Heart left ventricle (tissue), 16 donors: ENCODE measurements at regions of chr10 and their contacts with region 1.

Region 1: DNA sequence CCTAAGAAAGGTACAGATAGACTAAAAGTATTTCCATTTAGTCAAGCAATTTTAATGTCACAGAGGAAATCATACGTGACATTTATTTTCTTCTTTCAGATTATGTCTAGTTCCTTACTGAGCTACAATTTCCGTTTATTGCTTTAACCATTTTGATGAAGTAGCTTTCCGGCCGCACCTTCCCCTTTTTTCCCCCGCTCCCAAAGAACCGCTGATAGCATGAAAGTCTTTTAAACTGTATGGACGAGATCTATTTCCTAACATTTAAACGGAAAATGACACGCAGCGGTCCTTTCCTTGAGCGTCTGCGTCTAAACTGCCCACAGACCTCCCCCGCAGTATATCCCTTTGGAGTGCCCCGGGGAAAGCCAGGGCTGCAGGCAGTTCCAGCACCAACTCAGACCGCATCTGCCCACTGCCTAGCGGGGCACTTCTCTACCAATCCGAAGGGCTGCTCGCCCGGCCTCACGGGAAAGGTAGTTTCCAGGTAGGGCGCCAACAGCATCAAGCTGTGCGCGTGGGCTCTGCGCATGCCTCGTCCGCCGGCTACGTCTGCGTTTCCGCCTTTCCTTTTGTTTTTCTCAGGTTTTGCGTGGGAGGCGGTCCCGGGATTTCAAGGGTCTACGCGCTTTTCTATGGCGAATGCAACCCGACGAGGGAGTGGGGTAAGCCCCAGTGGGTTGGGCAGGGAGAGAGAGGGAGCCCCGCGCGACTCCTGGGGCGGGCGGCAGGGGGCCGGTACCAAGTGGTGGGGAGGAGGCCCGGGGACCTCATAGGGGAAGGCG is at the start of gene ZNF33A:
- DNase-seq: peak; percentile 91 to 95 (median 92)
- ATAC-seq: peak; percentile 96 to 97 (median 96)
- H3K4me3 ChIP-seq: peak within 1 kb of the TSS; percentile 51 to 94 (median 71)
- H3K27ac ChIP-seq: peak within 1 kb of the TSS; percentile 92 to 99 (median 98)
- H3K4me1 ChIP-seq: peaks cover 0 to 19% (median 7%) of the 10 kb centered on the region in 12 donors
- H3K27me3 ChIP-seq: no peaks in the 10 kb centered on the region
- CTCF ChIP-seq: no peak
- POLR2A ChIP-seq: peak in 1 of 2 donors; percentile 67
- total RNA-seq, gene ZNF33A: 15.6 to 29.7 (median 19.0) TPM

Region 2: GRCh38 chr10:37812290-37812689 is 198.0 kb before region 1 on chr10:
- intact Hi-C with region 1: no loop called
- DNase-seq: no peak
- ATAC-seq: no peak
- H3K4me3 ChIP-seq: no peak overlapping the region
- H3K27ac ChIP-seq: no peak overlapping the region
- H3K4me1 ChIP-seq: no peaks in the 10 kb centered on the region
- H3K27me3 ChIP-seq: no peaks in the 10 kb centered on the region
- CTCF ChIP-seq: no peak
- POLR2A ChIP-seq: no peak

Region 3: DNA sequence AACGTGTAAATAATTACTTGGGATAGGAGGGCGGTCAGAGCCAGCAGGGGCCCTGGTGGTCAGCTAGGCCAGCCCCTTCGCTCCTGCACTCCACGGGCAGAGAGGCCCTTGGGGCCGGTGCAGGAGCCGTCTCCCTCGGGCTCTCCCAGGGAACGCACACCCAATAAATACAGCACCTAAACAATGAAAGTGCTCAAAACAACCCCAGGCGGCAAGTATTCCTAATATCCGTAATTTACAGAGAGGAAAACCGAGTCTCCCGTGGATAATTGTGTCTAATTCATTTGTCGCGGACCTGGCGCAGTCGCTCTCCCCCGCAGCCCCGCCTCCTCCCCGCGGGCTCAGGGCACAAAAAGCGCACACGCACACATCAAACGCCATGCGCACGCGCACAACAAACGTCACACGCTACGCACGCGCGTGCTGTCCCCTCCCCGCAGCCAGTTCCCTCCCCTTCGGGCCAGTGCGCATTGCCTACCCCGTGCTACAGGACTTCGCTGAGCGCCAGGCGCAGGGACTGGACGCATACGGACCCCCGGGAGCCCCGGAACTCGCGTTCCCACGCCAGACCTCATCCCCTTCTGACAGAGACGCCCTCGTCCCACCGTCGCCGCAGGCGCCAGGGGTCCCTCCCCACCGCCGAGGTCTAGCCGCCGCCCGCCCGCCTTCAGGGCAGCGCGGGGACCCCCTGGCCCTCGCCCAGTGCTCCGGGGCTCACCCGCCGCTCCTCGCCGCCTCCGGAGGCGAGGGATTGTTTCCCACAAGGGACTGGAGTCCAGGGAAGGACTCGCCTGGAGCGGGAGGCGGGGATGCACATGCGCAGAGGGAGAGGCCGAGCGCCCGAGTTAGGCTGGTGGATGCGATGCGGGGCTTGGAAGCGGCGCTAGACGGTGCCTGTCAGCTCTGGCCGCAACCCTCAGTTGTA is 152.8 kb before region 1 on chr10 and contains the start of gene ZNF248:
- intact Hi-C with region 1: loop called in 4 of 10 experiments (anchors 1 to 10 kb)
- DNase-seq: peak; percentile 96 to 98 (median 97)
- ATAC-seq: peak; percentile 98 to 99 (median 99)
- H3K4me3 ChIP-seq: peak within 1 kb of the TSS; percentile 57 to 99 (median 78)
- H3K27ac ChIP-seq: peak within 1 kb of the TSS; percentile 97 to 100 (median 99)
- H3K4me1 ChIP-seq: peaks cover 0 to 34% (median 24%) of the 10 kb centered on the region in 12 donors
- H3K27me3 ChIP-seq: no peaks in the 10 kb centered on the region
- CTCF ChIP-seq: peak in 3 of 12 donors; percentile 7 to 32 (median 14)
- POLR2A ChIP-seq: peak; percentile 54 to 97
- total RNA-seq, gene ZNF248: 6.3 to 14.7 (median 9.1) TPM

Region 4: DNA sequence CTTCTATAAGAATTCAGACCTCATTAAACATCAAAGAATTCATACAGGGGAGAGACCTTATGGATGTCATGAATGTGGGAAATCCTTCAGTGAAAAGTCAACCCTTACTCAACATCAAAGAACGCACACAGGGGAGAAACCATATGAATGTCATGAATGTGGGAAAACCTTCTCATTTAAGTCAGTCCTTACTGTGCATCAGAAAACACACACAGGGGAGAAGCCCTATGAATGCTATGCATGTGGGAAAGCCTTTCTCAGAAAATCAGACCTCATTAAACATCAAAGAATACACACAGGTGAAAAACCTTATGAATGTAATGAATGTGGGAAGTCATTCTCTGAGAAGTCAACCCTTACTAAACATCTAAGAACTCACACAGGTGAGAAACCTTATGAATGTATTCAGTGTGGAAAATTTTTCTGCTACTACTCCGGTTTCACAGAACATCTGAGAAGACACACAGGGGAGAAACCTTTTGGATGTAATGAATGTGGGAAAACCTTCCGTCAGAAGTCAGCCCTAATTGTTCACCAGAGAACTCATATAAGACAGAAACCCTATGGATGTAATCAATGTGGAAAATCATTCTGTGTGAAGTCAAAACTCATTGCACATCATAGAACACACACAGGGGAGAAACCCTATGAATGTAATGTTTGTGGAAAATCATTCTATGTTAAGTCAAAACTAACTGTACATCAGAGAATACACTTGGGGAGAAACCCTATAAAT is 107.9 kb after region 1 on chr10:
- intact Hi-C with region 1: no loop called
- DNase-seq: no peak
- ATAC-seq: no peak
- H3K4me3 ChIP-seq: no peak overlapping the region
- H3K27ac ChIP-seq: no peak overlapping the region
- H3K4me1 ChIP-seq: no peaks in the 10 kb centered on the region
- H3K27me3 ChIP-seq: no peaks in the 10 kb centered on the region
- CTCF ChIP-seq: no peak
- POLR2A ChIP-seq: no peak

Region 5: DNA sequence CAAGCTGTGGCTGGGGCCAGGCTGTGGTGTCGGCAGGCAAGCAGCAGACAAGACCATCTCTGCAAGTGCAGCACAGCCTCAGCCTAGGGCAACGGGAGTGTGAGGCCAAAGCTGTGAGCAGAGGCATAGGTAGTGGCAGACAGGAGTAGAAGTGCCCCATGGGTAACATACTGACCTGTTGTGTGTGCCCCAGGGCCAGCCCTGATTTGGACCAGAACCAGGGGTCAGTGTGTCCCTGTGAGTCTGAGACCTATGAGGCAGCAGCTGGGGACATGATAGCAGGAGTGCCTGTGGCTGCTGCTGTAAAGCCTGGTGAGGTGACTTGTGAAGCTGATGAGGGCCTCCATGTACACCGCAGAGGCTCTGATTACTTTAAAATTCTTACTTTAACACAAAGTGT is 165.5 kb after region 1 on chr10:
- intact Hi-C with region 1: no loop called
- DNase-seq: no peak
- ATAC-seq: no peak
- H3K4me3 ChIP-seq: no peak overlapping the region
- H3K27ac ChIP-seq: no peak overlapping the region
- H3K4me1 ChIP-seq: no peaks in the 10 kb centered on the region
- H3K27me3 ChIP-seq: no peaks in the 10 kb centered on the region
- CTCF ChIP-seq: no peak
- POLR2A ChIP-seq: no peak